Naive thymus-derived CD4-positive, alpha-beta T cell (primary cell): ENCODE measurements at regions of chr19 and their contacts with region 1.

Region 1: GRCh38 chr19:47075179-47075810 is 26.9 kb upstream of the TMEM160 start:
- DNase-seq: no peak
- ATAC-seq: peak; percentile 74
- H3K4me3 ChIP-seq: no peak overlapping the region
- H3K4me3 Mint-ChIP-seq: no peak overlapping the region
- H3K27ac ChIP-seq: no peak overlapping the region
- H3K27ac Mint-ChIP-seq: peak overlapping the region in 4 of 9 donors; percentile 19 to 76 (median 48)
- H3K4me1 ChIP-seq: no peaks in the 10 kb centered on the region
- H3K4me1 Mint-ChIP-seq: peaks cover 6 to 29% (median 14%) of the 10 kb centered on the region in 7 donors
- H3K27me3 ChIP-seq: no peaks in the 10 kb centered on the region
- H3K27me3 Mint-ChIP-seq: no peaks in the 10 kb centered on the region

Region 2: DNA sequence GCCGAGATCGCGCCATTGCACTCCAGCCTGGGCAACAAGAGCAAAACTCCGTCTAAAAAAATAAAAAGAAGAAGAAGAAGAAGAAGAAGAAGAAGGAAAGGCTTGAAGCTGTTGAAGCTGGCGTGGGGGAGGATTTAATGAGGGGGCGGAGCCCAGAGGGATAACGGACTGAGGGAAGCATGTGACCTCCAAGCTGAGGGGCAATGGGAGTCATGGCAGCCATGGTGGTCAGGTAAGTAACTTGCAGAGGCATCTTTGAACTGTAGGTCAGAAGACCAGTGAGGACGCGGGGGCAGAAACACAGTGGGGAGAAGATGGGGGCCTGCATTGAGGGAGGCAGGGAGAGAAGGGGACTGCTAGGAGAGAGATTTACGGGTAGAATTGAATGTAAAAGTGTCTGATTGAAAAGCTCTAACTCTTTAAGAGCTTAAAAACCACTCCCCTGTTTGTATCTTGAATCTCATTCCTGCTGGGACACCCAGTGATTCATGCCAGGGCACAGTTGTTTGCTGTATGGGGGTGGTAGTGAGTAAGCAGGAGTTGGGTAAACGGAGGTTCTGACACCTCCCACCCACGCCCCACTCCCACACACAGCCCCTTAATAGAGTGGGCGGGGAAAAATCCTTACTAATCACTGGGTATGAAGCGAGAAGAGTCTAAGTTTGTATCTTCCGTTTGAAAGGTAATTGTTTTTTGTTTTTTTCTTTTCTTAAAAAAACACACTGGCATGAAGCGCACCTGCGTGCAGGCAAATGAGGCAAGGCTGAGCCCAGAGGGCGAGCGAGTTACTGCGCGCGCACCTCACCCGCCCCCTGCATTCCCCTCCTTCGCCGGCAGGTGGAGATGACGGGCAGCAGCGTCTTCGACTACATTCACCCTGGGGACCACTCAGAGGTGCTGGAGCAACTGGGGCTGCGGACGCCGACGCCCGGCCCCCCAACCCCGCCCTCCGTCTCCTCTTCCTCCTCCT is 39.9 kb before region 1 on chr19:
- CTCF ChIA-PET with region 1: no interaction called
- POLR2A ChIA-PET with region 1: no interaction called
- intact Hi-C with region 1: loop called in 1 of 2 experiments (anchors 1 kb)
- DNase-seq: peak; percentile 91 to 100 (median 97)
- ATAC-seq: peak; percentile 99
- H3K4me3 ChIP-seq: peak overlapping the region; percentile 74
- H3K4me3 Mint-ChIP-seq: peak overlapping the region; percentile 83 to 97 (median 92)
- H3K27ac ChIP-seq: peak overlapping the region; percentile 62
- H3K27ac Mint-ChIP-seq: peak overlapping the region; percentile 71 to 93 (median 85)
- H3K4me1 ChIP-seq: peaks cover 11 to 13% of the 10 kb centered on the region in 2 donors
- H3K4me1 Mint-ChIP-seq: peaks cover 7 to 23% (median 16%) of the 10 kb centered on the region in 7 donors
- H3K27me3 ChIP-seq: no peaks in the 10 kb centered on the region
- H3K27me3 Mint-ChIP-seq: peaks cover 6 to 26% (median 14%) of the 10 kb centered on the region in 5 donors

Region 3: DNA sequence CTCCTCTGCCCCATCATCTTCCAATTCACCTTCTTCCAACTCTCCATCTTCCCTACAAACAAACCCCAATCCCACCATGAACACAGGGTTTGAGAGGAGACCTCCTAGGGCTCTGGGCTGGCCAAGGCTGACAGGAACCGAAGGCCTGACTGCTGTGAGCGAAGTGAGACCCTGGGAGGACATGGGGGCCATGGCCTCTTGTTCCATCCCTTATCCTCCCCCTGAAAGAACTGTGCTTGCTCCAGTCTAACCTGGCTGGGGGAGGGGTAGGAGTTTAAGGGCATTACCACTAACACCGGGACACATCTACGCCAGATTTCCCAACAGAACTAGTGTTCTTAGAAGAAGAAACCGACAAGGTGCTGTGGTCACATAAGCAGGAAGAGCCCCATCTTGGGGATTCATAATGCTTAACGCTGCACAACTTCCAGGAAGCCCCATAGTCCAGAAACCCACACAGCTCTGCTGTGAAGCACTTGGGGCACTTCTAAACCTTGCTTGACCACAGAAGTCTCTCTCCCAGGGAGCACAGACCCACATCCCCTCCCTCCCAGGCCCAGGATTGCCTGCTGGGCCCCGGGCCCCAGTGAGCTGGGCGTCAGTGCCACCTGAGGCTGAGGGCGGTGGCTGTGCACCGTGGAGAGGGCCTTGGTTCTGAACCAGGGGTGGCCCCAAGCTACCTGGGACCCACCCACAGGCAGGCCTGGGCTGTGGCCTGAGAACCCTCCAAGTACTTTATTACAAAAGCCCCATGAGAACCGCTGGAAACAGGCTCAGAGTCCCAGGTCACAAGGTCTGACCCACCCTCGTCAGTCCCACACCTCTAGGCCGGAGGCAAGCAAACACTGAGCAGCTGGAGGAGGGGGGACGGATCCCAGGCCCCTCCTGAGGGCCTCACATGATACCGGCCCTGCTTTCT is 19.5 kb after region 1 on chr19:
- CTCF ChIA-PET with region 1: interaction called, 3 read pairs
- POLR2A ChIA-PET with region 1: interaction called, 3 read pairs
- intact Hi-C with region 1: loop called in 1 of 2 experiments (anchors 1 kb)
- DNase-seq: peak in 5 of 9 donors; percentile 15 to 67 (median 23)
- ATAC-seq: peak; percentile 74
- H3K4me3 ChIP-seq: peak overlapping the region; percentile 28
- H3K4me3 Mint-ChIP-seq: peak overlapping the region in 8 of 10 donors; percentile 16 to 93 (median 62)
- H3K27ac ChIP-seq: peak overlapping the region; percentile 64
- H3K27ac Mint-ChIP-seq: peak overlapping the region; percentile 82 to 99 (median 92)
- H3K4me1 ChIP-seq: peaks cover 19 to 21% of the 10 kb centered on the region in 2 donors
- H3K4me1 Mint-ChIP-seq: peaks cover 36 to 77% (median 43%) of the 10 kb centered on the region in 7 donors
- H3K27me3 ChIP-seq: no peaks in the 10 kb centered on the region
- H3K27me3 Mint-ChIP-seq: no peaks in the 10 kb centered on the region

Region 4: GRCh38 chr19:47381653-47382279 is 306.5 kb after region 1 on chr19:
- CTCF ChIA-PET with region 1: no interaction called
- POLR2A ChIA-PET with region 1: no interaction called
- intact Hi-C with region 1: no loop called
- DNase-seq: peak in 1 of 9 donors; percentile 24
- ATAC-seq: peak; percentile 71
- H3K4me3 ChIP-seq: no peak overlapping the region
- H3K4me3 Mint-ChIP-seq: peak overlapping the region in 2 of 10 donors; percentile 20 to 24
- H3K27ac ChIP-seq: peak overlapping the region; percentile 47
- H3K27ac Mint-ChIP-seq: peak overlapping the region in 8 of 9 donors; percentile 63 to 85 (median 78)
- H3K4me1 ChIP-seq: peaks cover 9 to 19% of the 10 kb centered on the region in 2 donors
- H3K4me1 Mint-ChIP-seq: peaks cover 13 to 20% (median 17%) of the 10 kb centered on the region in 7 donors
- H3K27me3 ChIP-seq: no peaks in the 10 kb centered on the region
- H3K27me3 Mint-ChIP-seq: no peaks in the 10 kb centered on the region